Prostate gland (tissue), 2 donors: ENCODE measurements at regions of chr3 and their contacts with region 1.

Region 1: DNA sequence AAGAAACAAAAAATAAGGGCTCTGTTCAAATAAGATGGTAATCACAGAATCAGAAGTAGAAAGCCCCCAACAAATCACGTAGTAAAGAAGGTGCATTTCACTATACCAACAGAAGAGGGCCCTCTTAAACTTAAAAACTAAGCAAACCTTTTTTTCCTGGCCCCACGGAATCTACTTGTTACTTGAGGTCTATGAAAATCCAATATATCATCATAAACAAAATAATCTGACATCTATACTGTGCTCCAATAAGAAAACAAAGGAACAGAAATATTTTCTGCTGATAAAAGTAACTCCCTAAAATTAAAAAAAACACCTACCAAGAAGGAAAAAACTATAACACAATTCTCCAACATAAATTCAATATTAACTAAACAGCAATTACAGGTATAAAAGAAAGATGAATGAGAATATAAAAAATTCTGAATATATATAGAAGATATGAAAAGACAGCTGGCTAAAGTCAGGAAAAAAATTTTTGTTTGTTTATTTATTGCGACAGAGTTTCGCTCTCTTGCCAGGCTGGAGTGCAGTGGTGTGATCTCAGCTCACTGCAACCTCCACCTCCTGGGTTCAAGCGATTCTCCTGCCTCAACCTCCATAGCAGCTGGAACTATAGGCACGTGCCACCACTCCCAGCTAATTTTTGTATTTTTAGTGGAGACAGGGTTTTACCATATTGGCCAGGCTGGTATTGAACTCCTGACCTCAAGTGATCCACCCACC is 81.8 kb downstream of the CLASP2 start:
- DNase-seq: peak; percentile 6
- H3K4me3 ChIP-seq: no peak overlapping the region
- H3K27ac ChIP-seq: no peak overlapping the region
- H3K4me1 ChIP-seq: no peaks in the 10 kb centered on the region
- H3K27me3 ChIP-seq: no peaks in the 10 kb centered on the region
- CTCF ChIP-seq: peak; percentile 18 to 72 (median 50)
- POLR2A ChIP-seq: no peak

Region 2: GRCh38 chr3:33592999-33593398 is 43.3 kb before region 1 on chr3:
- intact Hi-C with region 1: no loop called
- DNase-seq: no peak
- H3K4me3 ChIP-seq: no peak overlapping the region
- H3K27ac ChIP-seq: no peak overlapping the region
- H3K4me1 ChIP-seq: no peaks in the 10 kb centered on the region
- H3K27me3 ChIP-seq: no peaks in the 10 kb centered on the region
- CTCF ChIP-seq: no peak
- POLR2A ChIP-seq: no peak

Region 3: DNA sequence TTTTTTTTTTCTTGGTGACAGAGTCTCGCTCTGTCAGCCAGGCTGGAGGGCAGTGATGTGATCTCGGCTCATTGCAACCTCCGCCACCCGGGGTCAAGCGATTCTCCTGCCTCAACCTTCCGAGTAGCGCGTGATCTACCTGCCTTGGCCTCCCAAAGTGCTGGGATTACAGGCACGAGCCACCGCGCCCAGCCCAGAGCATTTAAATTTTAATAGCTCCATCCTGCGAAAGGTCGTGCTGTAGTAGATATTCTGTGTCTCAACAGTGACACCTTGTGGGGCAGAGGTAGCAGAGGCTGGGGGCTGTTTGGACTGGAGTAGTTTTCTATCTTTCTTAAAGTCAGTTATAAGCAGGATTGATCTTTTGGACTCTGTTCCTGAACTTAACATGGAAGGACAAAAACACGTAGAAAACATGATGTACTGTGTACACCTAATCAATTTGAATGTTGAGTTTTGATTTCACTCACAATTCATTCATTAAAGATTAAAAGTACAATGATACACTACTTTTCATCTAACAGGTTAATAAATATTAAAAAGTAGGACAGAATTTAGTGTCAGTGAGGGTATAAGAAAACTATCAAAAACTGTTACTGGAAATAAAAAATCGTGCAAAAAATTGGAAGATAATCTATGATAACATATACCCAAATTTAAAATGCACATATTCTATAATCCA is 151.2 kb after region 1 on chr3:
- intact Hi-C with region 1: loop called (anchors 2 kb)
- DNase-seq: peak; percentile 79
- H3K4me3 ChIP-seq: no peak overlapping the region
- H3K27ac ChIP-seq: no peak overlapping the region
- H3K4me1 ChIP-seq: no peaks in the 10 kb centered on the region
- H3K27me3 ChIP-seq: no peaks in the 10 kb centered on the region
- CTCF ChIP-seq: peak in 3 of 4 experiments; percentile 65 to 67 (median 66)
- POLR2A ChIP-seq: no peak